Activated CD4-positive, alpha-beta T cell treated with anti-CD3 and anti-CD28 coated beads, Interleukin-2, amount 10 ng/mL, durations not matched to agents 24 days and 14 days (primary cell): ENCODE measurements at regions of chr12 and their contacts with region 1.

Region 1: DNA sequence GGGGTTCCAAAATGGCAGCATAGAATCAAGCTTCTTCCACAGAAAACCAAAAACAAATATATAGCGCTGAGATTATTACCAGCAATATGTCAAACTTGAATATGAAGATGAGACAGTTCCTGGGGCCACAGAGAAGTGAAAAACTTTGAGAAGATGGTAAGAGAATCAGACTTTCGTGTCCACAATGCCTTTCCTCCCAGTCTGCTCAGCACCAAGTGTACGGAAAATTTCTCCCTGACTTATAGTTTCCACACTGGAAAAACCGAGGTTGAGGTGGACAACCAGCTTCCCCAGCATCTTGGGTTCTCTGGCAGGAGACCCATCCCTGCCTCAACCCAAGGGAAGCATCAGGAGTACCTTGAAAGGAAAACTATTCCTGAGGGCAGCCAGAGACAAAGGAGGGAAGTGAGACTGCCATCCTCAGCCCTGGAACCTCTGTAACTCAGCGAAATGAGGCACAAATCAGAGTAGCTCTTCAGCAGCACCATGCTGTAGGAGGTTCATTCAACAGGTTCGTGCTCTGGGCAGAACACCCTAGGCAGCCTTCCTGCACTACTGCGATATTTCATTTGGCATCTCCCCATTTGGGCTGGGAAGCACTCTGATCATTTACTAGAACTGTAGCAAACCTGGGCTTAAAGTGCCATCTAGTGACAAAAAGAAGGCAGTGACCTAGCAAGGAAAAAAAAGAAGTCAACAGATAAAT is 52.4 kb upstream of the CAPRIN2 start:
- DNase-seq: peak; percentile 76
- H3K4me3 Mint-ChIP-seq: no peak overlapping the region
- H3K27ac Mint-ChIP-seq: no peak overlapping the region
- H3K4me1 Mint-ChIP-seq: no peaks in the 10 kb centered on the region
- H3K27me3 Mint-ChIP-seq: peaks cover 25% of the 10 kb centered on the region

Region 2: GRCh38 chr12:29519585-29520182 is 1287.5 kb before region 1 on chr12:
- intact Hi-C with region 1: loop called (anchors 1 kb)
- DNase-seq: peak; percentile 68
- H3K4me3 Mint-ChIP-seq: no peak overlapping the region
- H3K27ac Mint-ChIP-seq: no peak overlapping the region
- H3K4me1 Mint-ChIP-seq: no peaks in the 10 kb centered on the region
- H3K27me3 Mint-ChIP-seq: peaks cover 5% of the 10 kb centered on the region

Region 3: DNA sequence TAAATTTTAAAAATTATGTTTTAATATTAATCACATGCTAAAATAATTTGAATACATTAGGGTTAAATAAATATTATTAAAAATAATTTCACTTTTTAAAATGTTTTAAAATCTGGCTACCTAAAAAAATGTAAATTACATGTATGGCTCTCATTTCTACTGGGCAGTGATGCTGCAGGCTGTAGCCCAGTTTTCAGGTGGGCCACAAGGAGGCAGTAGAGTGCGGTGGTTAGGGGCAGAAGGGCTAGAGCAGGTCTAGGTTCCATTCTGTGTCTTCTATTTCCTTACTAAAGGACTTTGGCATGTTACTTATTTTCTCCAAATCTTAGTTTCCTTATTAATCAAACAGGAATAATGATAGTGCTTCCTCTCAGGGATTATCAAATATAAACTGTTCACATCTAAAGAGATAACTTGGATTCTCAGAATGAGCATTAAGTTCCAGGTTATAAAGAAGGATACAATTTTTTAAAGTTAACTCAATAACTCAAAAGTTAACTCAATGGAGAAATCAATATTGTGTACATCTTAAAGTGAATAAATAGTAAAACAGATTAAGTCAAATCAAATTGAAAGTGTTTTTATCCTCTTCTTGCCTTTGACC is 1254.7 kb before region 1 on chr12:
- intact Hi-C with region 1: loop called (anchors 1 kb)
- DNase-seq: peak; percentile 86
- H3K4me3 Mint-ChIP-seq: no peak overlapping the region
- H3K27ac Mint-ChIP-seq: no peak overlapping the region
- H3K4me1 Mint-ChIP-seq: no peaks in the 10 kb centered on the region
- H3K27me3 Mint-ChIP-seq: peaks cover 5% of the 10 kb centered on the region

Region 4: GRCh38 chr12:31035967-31036665 is 229.0 kb after region 1 on chr12:
- intact Hi-C with region 1: no loop called
- DNase-seq: no peak
- H3K4me3 Mint-ChIP-seq: no peak overlapping the region
- H3K27ac Mint-ChIP-seq: no peak overlapping the region
- H3K4me1 Mint-ChIP-seq: no peaks in the 10 kb centered on the region
- H3K27me3 Mint-ChIP-seq: peaks cover 8% of the 10 kb centered on the region

Region 5: DNA sequence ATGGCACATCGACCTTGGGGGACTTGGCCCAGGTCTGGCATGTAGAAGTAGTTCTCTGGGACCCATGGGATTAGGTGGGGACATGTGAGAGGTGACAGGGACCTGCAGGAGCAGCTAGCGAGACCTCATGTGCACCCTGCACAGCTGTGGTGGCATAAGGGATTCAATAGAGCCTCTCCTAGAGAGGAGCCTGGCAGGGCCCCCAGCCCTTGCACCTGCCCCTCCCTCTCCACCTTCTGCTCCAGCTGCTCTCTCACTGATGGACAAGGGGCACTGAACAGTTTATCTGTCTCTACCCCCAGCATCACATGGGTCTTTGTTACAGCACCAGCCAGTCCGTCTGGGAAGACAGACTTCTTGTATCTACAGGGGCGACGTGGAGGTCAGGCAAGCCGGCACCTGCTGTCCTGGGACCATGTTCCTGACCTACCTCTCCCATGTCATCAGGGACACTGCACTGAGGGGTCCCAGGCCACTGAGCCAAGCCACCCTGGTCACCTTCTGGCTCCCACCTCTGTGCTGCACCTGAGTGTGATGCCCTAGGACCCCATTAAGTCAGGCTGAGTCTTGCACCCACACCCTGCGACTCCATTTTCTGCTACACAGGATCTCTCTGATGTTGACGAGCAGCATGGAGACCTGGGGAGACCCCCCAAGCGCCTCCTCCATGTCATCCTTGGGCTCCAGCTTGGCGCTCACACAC is 299.1 kb after region 1 on chr12:
- intact Hi-C with region 1: no loop called
- DNase-seq: peak; percentile 48
- H3K4me3 Mint-ChIP-seq: no peak overlapping the region
- H3K27ac Mint-ChIP-seq: no peak overlapping the region
- H3K4me1 Mint-ChIP-seq: no peaks in the 10 kb centered on the region
- H3K27me3 Mint-ChIP-seq: peaks cover 2% of the 10 kb centered on the region